AG04449 (cell line): ENCODE measurements at regions of chr1 and their contacts with region 1.

Region 1: DNA sequence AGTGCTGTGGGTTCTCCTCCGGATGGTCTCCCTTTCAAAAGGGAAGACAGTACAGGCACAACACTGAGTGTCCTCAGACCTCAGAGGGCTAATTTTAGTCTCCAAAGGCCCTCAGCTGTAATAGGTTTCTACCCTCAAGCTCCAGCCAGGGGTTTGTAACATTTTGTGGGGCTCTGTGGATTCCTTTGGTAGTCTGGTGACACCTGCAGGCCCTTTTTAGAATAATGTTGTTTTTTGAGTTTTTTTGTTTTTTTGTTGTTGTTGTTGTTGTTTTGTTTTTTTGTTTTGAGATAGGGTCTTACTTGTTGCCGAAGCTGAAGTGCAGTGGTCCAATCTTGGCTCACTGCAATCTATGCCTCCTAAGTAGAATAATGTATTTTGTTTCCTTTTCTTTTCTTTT is 15.0 kb upstream of the TMEM201 start:
- DNase-seq: no peak
- H3K4me3 ChIP-seq: no peak overlapping the region
- CTCF ChIP-seq: no peak

Region 2: GRCh38 chr1:9558271-9558945 is 15.3 kb before region 1 on chr1:
- CTCF ChIA-PET with region 1: interaction called, 11 read pairs
- POLR2A ChIA-PET with region 1: no interaction called
- DNase-seq: no peak
- H3K4me3 ChIP-seq: no peak overlapping the region
- CTCF ChIP-seq: no peak

Region 3: DNA sequence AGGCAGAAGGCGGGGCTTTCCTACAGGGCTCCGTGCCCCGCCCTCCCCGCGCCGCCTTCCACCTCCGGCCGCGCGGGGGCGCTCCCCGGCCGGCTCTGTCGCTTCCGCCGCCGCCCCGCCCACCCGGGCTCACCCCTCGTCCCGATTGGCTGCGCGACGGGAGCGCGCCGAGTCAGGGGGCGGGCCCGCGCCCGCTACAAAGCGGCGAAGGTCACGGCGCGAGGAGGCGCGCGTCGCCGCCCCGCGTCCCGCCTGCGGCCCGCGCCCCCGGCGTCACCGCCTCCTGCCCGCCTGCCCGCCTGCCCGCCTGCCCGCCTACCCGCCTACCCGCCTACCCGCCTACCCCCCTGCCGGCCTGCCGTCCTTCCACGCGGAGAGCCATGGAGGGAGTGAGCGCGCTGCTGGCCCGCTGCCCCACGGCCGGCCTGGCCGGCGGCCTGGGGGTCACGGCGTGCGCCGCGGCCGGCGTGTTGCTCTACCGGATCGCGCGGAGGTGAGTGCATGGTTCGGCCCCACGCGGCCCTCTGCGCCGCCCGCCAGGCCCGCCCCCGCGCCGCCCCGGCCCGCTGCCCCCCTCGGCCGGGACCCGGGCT is 14.9 kb after region 1 on chr1 and contains the start of gene TMEM201:
- CTCF ChIA-PET with region 1: interaction called, 14 read pairs
- POLR2A ChIA-PET with region 1: no interaction called
- DNase-seq: peak; percentile 4
- H3K4me3 ChIP-seq: peak within 1 kb of the TSS; percentile 67
- CTCF ChIP-seq: peak; percentile 64